IMR-90 (cell line): ENCODE measurements at regions of chr16 and their contacts with region 1.

Region 1: GRCh38 chr16:6682142-6682811 is 650.4 kb upstream of the RBFOX1 start:
- DNase-seq: no peak
- ATAC-seq: no peak
- H3K4me3 ChIP-seq: no peak overlapping the region
- H3K27ac ChIP-seq: no peak overlapping the region
- H3K4me1 ChIP-seq: no peaks in the 10 kb centered on the region
- H3K27me3 ChIP-seq: no peaks in the 10 kb centered on the region
- CTCF ChIP-seq: 0 out of 2 replicates have a peak, but pooled peaks have one; percentile 7
- POLR2A ChIP-seq: no peak
- RAD21 ChIP-seq: no peak

Region 2: GRCh38 chr16:6232056-6232455 is 450.2 kb before region 1 on chr16:
- CTCF ChIA-PET with region 1: no interaction called
- POLR2A ChIA-PET with region 1: no interaction called
- dilution Hi-C with region 1: no loop called
- in situ Hi-C with region 1: no loop called
- intact Hi-C with region 1: no loop called
- DNase-seq: no peak
- ATAC-seq: no peak
- H3K4me3 ChIP-seq: no peak overlapping the region
- H3K27ac ChIP-seq: no peak overlapping the region
- H3K4me1 ChIP-seq: no peaks in the 10 kb centered on the region
- H3K27me3 ChIP-seq: no peaks in the 10 kb centered on the region
- CTCF ChIP-seq: no peak
- POLR2A ChIP-seq: no peak
- RAD21 ChIP-seq: no peak

Region 3: GRCh38 chr16:6698548-6698947 is 16.3 kb after region 1 on chr16:
- CTCF ChIA-PET with region 1: no interaction called
- POLR2A ChIA-PET with region 1: no interaction called
- dilution Hi-C with region 1: no loop called
- in situ Hi-C with region 1: no loop called
- intact Hi-C with region 1: no loop called
- DNase-seq: no peak
- ATAC-seq: no peak
- H3K4me3 ChIP-seq: no peak overlapping the region
- H3K27ac ChIP-seq: no peak overlapping the region
- H3K4me1 ChIP-seq: no peaks in the 10 kb centered on the region
- H3K27me3 ChIP-seq: no peaks in the 10 kb centered on the region
- CTCF ChIP-seq: no peak
- POLR2A ChIP-seq: no peak
- RAD21 ChIP-seq: no peak

Region 4: DNA sequence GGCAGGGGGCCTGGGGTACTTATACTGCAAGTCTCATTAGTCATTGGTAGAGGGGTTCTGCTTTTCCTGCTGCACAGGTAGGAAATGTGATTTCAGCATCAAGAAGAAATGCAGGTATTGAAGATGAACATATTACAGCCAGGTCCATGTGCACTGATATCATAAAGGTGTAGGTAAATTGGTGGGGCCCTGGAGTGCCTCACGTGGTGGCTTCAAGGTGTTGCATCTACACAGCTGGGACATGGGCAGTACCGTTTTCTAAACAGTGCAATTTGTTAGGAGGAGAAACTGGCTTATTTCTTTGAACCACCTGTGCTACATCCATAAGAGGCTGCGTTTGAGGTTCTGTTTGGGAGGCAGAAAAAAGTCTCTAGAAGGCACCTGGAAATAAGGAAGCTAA is 32.2 kb after region 1 on chr16:
- CTCF ChIA-PET with region 1: no interaction called
- POLR2A ChIA-PET with region 1: interaction called, 10 read pairs
- dilution Hi-C with region 1: no loop called
- in situ Hi-C with region 1: no loop called
- intact Hi-C with region 1: no loop called
- DNase-seq: no peak
- ATAC-seq: no peak
- H3K4me3 ChIP-seq: no peak overlapping the region
- H3K27ac ChIP-seq: no peak overlapping the region
- H3K4me1 ChIP-seq: no peaks in the 10 kb centered on the region
- H3K27me3 ChIP-seq: no peaks in the 10 kb centered on the region
- CTCF ChIP-seq: no peak
- POLR2A ChIP-seq: no peak
- RAD21 ChIP-seq: no peak